PC-9 (cell line): ENCODE measurements at regions of chr17 and their contacts with region 1.

Region 1: GRCh38 chr17:77287432-77288071 is 146.8 kb downstream of the SEC14L1 start:
- DNase-seq: peak; percentile 81 to 86
- H3K4me3 ChIP-seq: peak overlapping the region; percentile 72
- H3K27ac ChIP-seq: peak overlapping the region; percentile 99
- H3K4me1 ChIP-seq: peaks cover 70% of the 10 kb centered on the region
- H3K27me3 ChIP-seq: no peaks in the 10 kb centered on the region
- CTCF ChIP-seq: no peak

Region 2: GRCh38 chr17:77319211-77320043 is 31.9 kb after region 1 on chr17:
- CTCF ChIA-PET with region 1: no interaction called
- POLR2A ChIA-PET with region 1: interaction called, 6 read pairs
- intact Hi-C with region 1: loop called (anchors 1 kb)
- DNase-seq: peak; percentile 83 to 88
- H3K4me3 ChIP-seq: peak overlapping the region; percentile 82
- H3K27ac ChIP-seq: peak overlapping the region; percentile 95
- H3K4me1 ChIP-seq: peaks cover 25% of the 10 kb centered on the region
- H3K27me3 ChIP-seq: no peaks in the 10 kb centered on the region
- CTCF ChIP-seq: no peak

Region 3: DNA sequence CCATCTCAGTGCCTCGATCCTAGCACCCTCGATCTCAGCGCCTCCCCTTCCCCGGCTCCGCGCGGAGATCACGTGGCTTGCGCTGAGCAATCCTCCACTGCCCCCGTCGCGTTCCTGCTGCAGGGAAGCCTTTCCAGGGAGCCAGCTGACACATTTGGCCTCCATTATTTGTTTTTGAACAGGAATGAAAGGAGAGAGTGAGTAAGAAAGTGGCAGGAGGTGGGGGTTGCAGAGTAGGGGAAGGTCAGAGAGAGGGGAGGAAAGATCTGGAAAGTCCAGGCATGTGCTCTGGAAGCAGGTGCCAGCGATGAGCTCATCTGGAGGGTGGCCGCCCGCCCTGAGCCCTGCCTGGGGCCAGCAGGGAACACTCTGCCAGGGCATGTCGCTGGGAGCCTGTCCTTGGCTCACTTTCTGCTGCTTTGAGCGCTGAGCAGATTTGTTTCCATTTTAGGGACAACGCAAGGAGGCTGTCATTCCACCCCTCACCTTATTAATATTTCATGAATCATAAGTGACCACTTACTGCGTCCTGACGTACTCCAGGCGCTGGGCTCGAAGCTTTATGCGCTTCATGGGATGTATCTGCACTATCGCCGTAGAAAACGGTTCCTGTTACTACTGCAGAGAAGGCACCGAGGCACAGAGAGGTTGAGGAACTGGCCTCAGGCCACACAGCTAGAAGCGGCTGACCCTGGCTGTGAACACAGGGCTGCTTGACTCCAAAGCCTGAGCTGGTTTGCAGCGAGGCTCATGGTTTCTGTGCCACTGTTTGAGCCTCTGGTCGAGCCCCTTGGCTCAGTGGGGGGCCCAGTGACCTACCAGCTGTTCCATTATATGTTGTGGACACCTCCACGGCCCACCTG is 136.3 kb after region 1 on chr17:
- CTCF ChIA-PET with region 1: no interaction called
- POLR2A ChIA-PET with region 1: interaction called, 4 read pairs
- intact Hi-C with region 1: loop called (anchors 2 kb)
- DNase-seq: no peak
- H3K4me3 ChIP-seq: no peak overlapping the region
- H3K27ac ChIP-seq: no peak overlapping the region
- H3K4me1 ChIP-seq: peaks cover 28% of the 10 kb centered on the region
- H3K27me3 ChIP-seq: no peaks in the 10 kb centered on the region
- CTCF ChIP-seq: no peak